Prostate gland (tissue), 2 donors: ENCODE measurements at regions of chr14 and their contacts with region 1.

Region 1: DNA sequence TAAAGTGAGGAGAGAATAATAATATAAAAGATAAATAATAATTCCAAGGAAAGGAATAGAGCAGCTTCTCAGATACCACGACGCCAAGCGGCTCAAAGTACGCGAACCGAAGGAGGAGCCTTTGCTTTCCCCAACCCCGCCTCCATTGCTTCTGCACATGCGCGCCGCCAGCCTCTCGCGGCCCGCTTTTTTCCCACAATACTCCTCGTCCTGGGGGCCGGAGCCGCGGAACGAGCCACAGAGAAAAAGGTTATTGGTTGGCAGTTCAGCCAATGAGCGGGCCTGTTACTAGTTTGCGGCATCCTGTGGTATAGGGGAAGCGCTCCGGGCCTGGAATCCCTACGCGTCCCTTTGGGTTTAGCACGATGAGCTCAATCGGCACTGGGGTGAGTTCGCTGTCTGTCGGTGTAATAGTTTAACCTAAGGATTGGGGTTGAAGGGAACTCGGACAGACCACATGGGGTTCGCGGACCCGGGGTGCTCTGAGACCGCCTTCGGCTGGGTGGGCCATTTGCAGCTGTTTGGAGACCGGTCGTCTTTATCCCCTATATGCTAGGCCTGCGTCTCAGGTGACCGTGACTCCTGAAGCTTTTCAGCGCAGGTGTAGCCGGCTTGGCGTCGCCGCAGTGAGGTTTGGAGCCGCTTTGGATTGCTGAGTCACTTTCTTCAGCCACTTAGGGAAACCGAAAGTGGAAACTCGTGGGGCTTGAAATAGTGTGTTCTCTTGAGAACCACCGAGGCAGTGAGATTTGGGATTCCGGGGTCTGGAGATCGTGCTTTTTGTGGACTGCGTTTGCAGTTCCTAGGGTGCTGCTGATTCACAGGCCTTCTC is at the start of gene PSMA3:
- DNase-seq: peak; percentile 97
- H3K4me3 ChIP-seq: peak within 1 kb of the TSS; percentile 67 to 73
- H3K27ac ChIP-seq: peak within 1 kb of the TSS; percentile 91 to 95
- H3K4me1 ChIP-seq: no peaks in the 10 kb centered on the region
- H3K27me3 ChIP-seq: no peaks in the 10 kb centered on the region
- CTCF ChIP-seq: peak in 1 of 4 experiments; percentile 1
- POLR2A ChIP-seq: peak; percentile 68
- total RNA-seq, gene PSMA3: 76.8 to 93.7 TPM

Region 2: GRCh38 chr14:58297762-58298476 is 53.1 kb after region 1 on chr14:
- intact Hi-C with region 1: loop called (anchors 5 kb)
- DNase-seq: peak; percentile 99
- H3K4me3 ChIP-seq: peak overlapping the region; percentile 82 to 97
- H3K27ac ChIP-seq: peak overlapping the region; percentile 97
- H3K4me1 ChIP-seq: no peaks in the 10 kb centered on the region
- H3K27me3 ChIP-seq: no peaks in the 10 kb centered on the region
- CTCF ChIP-seq: peak in 2 of 4 experiments; percentile 8 to 35
- POLR2A ChIP-seq: peak; percentile 53

Region 3: DNA sequence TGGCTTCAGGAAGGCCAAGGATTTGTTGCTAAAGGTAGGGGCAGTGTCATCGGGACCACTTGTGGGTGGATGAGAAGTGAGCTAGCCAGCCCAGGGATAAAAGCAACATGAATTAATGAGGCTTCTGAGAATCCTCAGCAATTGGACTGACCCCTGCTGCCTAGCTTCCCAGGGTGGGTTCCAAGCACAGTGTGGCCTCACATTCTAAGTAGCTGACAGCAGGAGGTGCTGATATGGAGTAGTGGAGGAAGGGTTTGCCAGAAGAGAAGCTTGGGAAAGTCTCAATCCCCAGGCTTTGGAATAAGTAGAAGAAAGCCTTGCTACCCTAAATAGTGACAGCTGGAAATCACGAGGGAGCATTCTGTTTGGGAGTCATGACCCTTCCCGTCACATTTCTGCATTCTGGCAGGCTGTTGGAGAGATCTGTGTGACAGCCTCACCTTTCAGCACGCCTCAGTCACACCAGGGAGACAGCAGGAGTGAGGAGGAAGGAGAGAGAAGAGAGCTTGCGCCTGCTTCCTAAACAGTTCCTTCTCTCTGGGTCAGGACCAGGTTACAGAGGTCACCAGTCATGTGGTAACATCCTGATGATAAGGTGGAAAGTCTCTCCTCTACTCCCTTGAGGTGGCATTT is 424.2 kb after region 1 on chr14:
- intact Hi-C with region 1: no loop called
- DNase-seq: no peak
- H3K4me3 ChIP-seq: no peak overlapping the region
- H3K27ac ChIP-seq: no peak overlapping the region
- H3K4me1 ChIP-seq: no peaks in the 10 kb centered on the region
- H3K27me3 ChIP-seq: no peaks in the 10 kb centered on the region
- CTCF ChIP-seq: no peak
- POLR2A ChIP-seq: no peak